ENCODE measurements at regions of chr1 and their contacts with region 1.

Region 1: GRCh38 chr1:9110669-9111356 is 18.1 kb downstream of the GPR157 start:
- DNase-seq: peak; percentile 90
- H3K4me3 Mint-ChIP-seq: no peak overlapping the region
- H3K27ac Mint-ChIP-seq: no peak overlapping the region
- H3K4me1 Mint-ChIP-seq: peaks cover 12% of the 10 kb centered on the region
- H3K27me3 Mint-ChIP-seq: no peaks in the 10 kb centered on the region

Region 2: GRCh38 chr1:9121496-9122409 is 10.9 kb after region 1 on chr1:
- CTCF ChIA-PET with region 1: interaction called, 15 read pairs
- POLR2A ChIA-PET with region 1: no interaction called
- intact Hi-C with region 1: no loop called
- DNase-seq: peak; percentile 71
- H3K4me3 Mint-ChIP-seq: peak overlapping the region; percentile 23
- H3K27ac Mint-ChIP-seq: peak overlapping the region; percentile 77
- H3K4me1 Mint-ChIP-seq: peaks cover 28% of the 10 kb centered on the region
- H3K27me3 Mint-ChIP-seq: no peaks in the 10 kb centered on the region

Region 3: GRCh38 chr1:9145021-9145668 is 34.3 kb after region 1 on chr1:
- CTCF ChIA-PET with region 1: interaction called, 10 read pairs
- POLR2A ChIA-PET with region 1: interaction called, 4 read pairs
- intact Hi-C with region 1: no loop called
- DNase-seq: peak; percentile 68
- H3K4me3 Mint-ChIP-seq: no peak overlapping the region
- H3K27ac Mint-ChIP-seq: no peak overlapping the region
- H3K4me1 Mint-ChIP-seq: peaks cover 4% of the 10 kb centered on the region
- H3K27me3 Mint-ChIP-seq: no peaks in the 10 kb centered on the region

Region 4: GRCh38 chr1:9201401-9202239 is 90.8 kb after region 1 on chr1:
- CTCF ChIA-PET with region 1: interaction called, 40 read pairs
- POLR2A ChIA-PET with region 1: interaction called, 4 read pairs
- intact Hi-C with region 1: loop called (anchors 1 kb)
- DNase-seq: no peak
- H3K4me3 Mint-ChIP-seq: no peak overlapping the region
- H3K27ac Mint-ChIP-seq: no peak overlapping the region
- H3K4me1 Mint-ChIP-seq: peaks cover 34% of the 10 kb centered on the region
- H3K27me3 Mint-ChIP-seq: peaks cover 83% of the 10 kb centered on the region

Region 5: GRCh38 chr1:9494929-9495758 is 384.3 kb after region 1 on chr1:
- CTCF ChIA-PET with region 1: interaction called, 19 read pairs
- POLR2A ChIA-PET with region 1: no interaction called
- intact Hi-C with region 1: loop called (anchors 10 kb)
- DNase-seq: peak; percentile 76
- H3K4me3 Mint-ChIP-seq: peak overlapping the region; percentile 65
- H3K27ac Mint-ChIP-seq: no peak overlapping the region
- H3K4me1 Mint-ChIP-seq: peaks cover 3% of the 10 kb centered on the region
- H3K27me3 Mint-ChIP-seq: peaks cover 4% of the 10 kb centered on the region